OCI-LY7 (cell line): ENCODE measurements at regions of chr2 and their contacts with region 1.

Region 1: DNA sequence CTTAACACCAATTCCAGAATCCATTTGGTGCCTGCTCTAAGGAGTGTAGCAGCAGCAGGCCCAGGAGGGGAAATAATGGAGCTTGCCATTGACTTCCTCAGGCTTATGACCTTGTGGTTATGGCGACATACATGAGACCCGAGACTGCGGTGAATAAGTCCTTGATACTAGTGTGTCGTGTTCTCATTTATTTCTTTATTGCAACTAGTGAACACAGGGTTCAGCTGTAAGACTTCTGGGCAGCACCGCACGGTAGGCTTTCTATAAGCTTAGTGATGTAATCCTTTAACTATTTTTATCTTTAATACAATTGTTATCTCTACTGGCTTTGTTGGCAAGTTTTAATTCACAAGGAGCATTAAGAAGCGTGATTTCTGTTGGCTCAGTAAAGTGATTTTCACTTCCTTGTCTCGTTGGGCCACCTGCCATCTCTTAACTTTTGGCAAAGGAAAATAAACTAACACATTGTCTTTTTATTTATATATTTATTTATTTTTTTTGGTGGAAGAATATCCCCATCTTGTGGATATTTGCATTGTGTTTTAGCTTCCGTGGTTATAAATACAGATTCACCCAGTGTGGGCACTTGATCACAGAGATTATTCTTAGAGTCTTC is 139.8 kb downstream of the LTBP1 start:
- DNase-seq: peak; percentile 81
- H3K4me3 ChIP-seq: peak overlapping the region; percentile 34
- H3K27ac ChIP-seq: peak overlapping the region; percentile 95
- H3K4me1 ChIP-seq: peaks cover 60% of the 10 kb centered on the region
- CTCF ChIP-seq: peak; percentile 60

Region 2: DNA sequence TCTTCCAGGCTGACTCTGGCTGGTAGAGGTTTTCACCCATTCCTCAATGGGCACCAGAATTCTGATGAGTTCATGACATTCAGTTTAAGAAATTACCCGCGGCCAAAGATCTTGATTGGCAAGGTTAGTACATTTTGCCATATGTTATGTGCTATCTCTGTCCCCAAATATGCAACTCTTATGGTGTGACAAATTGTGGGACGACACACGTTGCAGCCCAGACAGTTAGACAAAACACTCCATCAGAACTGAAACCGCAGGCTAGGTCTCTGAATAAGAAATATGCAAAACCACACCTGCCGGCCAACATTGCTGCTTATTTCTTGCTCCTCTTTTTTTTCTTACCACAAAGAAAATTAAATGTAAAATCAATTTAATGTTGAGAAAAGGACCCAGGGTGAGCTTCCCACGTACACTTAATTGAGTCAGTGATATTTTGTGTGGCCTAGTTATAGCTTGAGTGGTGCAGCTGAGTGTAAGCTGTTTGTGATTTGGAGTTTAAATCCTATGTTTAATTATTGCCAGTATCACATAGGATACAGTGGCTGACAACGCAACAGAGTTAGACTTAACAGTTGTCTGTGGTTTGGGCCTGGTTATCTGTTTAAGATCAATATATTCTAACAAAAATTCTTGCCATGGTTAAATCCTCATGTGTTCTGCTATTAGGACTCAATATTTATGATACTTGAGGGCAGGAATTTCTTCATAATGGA is 175.5 kb before region 1 on chr2:
- CTCF ChIA-PET with region 1: no interaction called
- POLR2A ChIA-PET with region 1: no interaction called
- intact Hi-C with region 1: loop called (anchors 2 kb)
- DNase-seq: peak; percentile 95
- H3K4me3 ChIP-seq: peak overlapping the region; percentile 53
- H3K27ac ChIP-seq: peak overlapping the region; percentile 97
- H3K4me1 ChIP-seq: peaks cover 70% of the 10 kb centered on the region
- CTCF ChIP-seq: no peak

Region 3: GRCh38 chr2:33033606-33034081 is 52.9 kb before region 1 on chr2:
- CTCF ChIA-PET with region 1: no interaction called
- POLR2A ChIA-PET with region 1: interaction called, 3 read pairs
- intact Hi-C with region 1: loop called (anchors 2 kb)
- DNase-seq: peak; percentile 69
- H3K4me3 ChIP-seq: no peak overlapping the region
- H3K27ac ChIP-seq: no peak overlapping the region
- H3K4me1 ChIP-seq: peaks cover 26% of the 10 kb centered on the region
- CTCF ChIP-seq: peak; percentile 87

Region 4: GRCh38 chr2:33059471-33060156 is 26.9 kb before region 1 on chr2:
- CTCF ChIA-PET with region 1: interaction called, 5 read pairs
- POLR2A ChIA-PET with region 1: interaction called, 38 read pairs
- intact Hi-C with region 1: loop called (anchors 1 kb)
- DNase-seq: no peak
- H3K4me3 ChIP-seq: peak overlapping the region; percentile 54
- H3K27ac ChIP-seq: peak overlapping the region; percentile 91
- H3K4me1 ChIP-seq: peaks cover 65% of the 10 kb centered on the region
- CTCF ChIP-seq: no peak

Region 5: GRCh38 chr2:33107690-33108482 is 21.4 kb after region 1 on chr2:
- CTCF ChIA-PET with region 1: no interaction called
- POLR2A ChIA-PET with region 1: no interaction called
- intact Hi-C with region 1: no loop called
- DNase-seq: no peak
- H3K4me3 ChIP-seq: no peak overlapping the region
- H3K27ac ChIP-seq: no peak overlapping the region
- H3K4me1 ChIP-seq: no peaks in the 10 kb centered on the region
- CTCF ChIP-seq: no peak

Region 6: GRCh38 chr2:33599175-33599942 is 512.9 kb after region 1 on chr2 and contains the start of gene FAM98A:
- CTCF ChIA-PET with region 1: no interaction called
- POLR2A ChIA-PET with region 1: no interaction called
- intact Hi-C with region 1: loop called (anchors 10 kb)
- DNase-seq: peak; percentile 99
- H3K4me3 ChIP-seq: peak within 1 kb of the TSS; percentile 93
- H3K27ac ChIP-seq: peak within 1 kb of the TSS; percentile 51
- H3K4me1 ChIP-seq: peaks cover 19% of the 10 kb centered on the region
- CTCF ChIP-seq: no peak; the same call in 1 of the 2 replicates
- total RNA-seq, gene FAM98A: 33.2 and 35.7 TPM in 2 replicates